ENCODE measurements at regions of chr10 and their contacts with region 1.

Region 1: DNA sequence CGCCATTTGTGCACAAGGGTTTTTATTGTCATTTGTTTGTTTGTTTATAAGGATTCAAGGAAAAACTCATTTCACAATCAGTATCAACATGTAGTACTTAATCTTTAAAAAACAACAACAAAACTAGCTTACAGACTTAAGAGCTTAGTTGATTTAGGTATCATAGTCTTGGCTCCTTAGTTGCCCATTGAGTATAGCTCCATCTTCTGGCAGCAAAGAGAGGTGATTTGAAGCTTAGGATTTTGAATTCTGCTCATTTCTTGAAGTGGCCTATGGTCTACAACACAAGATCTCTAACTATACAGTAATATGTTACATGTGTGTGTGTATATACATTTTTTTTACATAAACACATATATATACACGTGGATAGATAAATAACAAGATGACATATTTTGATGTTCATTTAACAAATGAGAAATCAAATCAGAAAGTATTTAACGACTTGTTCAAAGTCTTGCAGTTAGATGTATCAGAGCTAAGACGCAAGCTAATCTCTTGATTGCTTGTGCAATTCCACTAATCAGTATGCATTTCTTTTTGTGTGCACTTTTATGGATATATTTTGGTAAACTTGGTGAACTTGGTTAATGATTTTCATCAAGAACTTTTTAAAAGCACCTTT is 307.3 kb downstream of the CAMK1D start:
- H3K4me3 ChIP-seq: no peak overlapping the region
- H3K27ac ChIP-seq: no peak overlapping the region
- H3K4me1 ChIP-seq: no peaks in the 10 kb centered on the region
- CTCF ChIP-seq: no peak

Region 2: DNA sequence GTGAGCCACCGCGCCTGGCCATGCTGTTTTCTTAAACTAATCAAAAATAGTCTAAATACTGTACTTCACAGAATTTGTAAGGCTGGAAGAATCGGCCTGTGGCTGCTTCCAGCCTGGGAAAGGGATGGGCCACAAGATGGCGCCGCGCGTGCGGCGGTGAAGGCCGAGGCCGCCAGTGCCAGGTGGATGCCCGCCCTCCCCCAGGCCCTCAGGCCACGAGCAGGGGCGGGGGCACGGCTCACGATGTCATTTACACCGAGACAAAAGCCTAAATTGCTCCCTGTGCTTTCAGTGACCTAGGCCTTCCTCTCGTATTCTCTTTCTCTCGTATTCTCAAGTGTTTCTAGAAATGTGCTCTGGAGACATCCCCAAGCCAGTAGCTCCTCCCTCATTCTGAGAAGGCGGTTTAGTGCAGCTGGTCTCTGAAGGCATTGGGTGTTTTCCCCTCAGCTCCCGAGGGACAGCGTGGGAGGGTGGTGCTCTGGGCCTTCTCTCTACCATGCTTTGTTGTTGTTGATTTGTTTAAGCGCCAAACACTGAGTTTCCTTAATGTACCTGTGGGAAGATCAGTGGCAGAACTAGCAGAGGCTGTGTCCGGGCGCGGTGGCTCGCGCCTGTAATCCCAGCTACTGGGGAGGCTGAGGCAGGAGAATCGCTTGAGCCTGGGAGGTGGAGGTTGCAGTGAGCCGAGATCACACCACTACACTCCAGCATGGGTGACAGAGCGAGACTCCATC is 392.3 kb before region 1 on chr10:
- CTCF ChIA-PET with region 1: interaction called, 16 read pairs
- POLR2A ChIA-PET with region 1: no interaction called
- H3K4me3 ChIP-seq: peak overlapping the region; percentile 13; the same call in 1 of the 2 replicates
- H3K27ac ChIP-seq: peak overlapping the region; percentile 57; the same call in 1 of the 2 replicates
- H3K4me1 ChIP-seq: no peaks in the 10 kb centered on the region
- CTCF ChIP-seq: peak; percentile 94

Region 3: GRCh38 chr10:12644380-12645144 is 12.1 kb before region 1 on chr10:
- CTCF ChIA-PET with region 1: interaction called, 34 read pairs
- POLR2A ChIA-PET with region 1: interaction called, 3 read pairs
- H3K4me3 ChIP-seq: no peak overlapping the region
- H3K27ac ChIP-seq: no peak overlapping the region
- H3K4me1 ChIP-seq: no peaks in the 10 kb centered on the region
- CTCF ChIP-seq: no peak

Region 4: GRCh38 chr10:12876266-12876665 is 219.6 kb after region 1 on chr10:
- CTCF ChIA-PET with region 1: no interaction called
- POLR2A ChIA-PET with region 1: no interaction called
- H3K4me3 ChIP-seq: no peak overlapping the region
- H3K27ac ChIP-seq: no peak overlapping the region
- H3K4me1 ChIP-seq: no peaks in the 10 kb centered on the region
- CTCF ChIP-seq: no peak